Sigmoid colon (tissue), 7 donors: ENCODE measurements at regions of chr5 and their contacts with region 1.

Region 1: GRCh38 chr5:82351754-82352145 is 73.6 kb upstream of the RPS23 start:
- DNase-seq: no peak
- H3K4me3 ChIP-seq: no peak overlapping the region
- H3K27ac ChIP-seq: no peak overlapping the region
- H3K4me1 ChIP-seq: peaks cover 0 to 11% (median 5%) of the 10 kb centered on the region in 4 donors
- H3K27me3 ChIP-seq: no peaks in the 10 kb centered on the region
- CTCF ChIP-seq: peak; percentile 35 to 77 (median 75)
- EP300 ChIP-seq: no peak
- POLR2A ChIP-seq: no peak

Region 2: DNA sequence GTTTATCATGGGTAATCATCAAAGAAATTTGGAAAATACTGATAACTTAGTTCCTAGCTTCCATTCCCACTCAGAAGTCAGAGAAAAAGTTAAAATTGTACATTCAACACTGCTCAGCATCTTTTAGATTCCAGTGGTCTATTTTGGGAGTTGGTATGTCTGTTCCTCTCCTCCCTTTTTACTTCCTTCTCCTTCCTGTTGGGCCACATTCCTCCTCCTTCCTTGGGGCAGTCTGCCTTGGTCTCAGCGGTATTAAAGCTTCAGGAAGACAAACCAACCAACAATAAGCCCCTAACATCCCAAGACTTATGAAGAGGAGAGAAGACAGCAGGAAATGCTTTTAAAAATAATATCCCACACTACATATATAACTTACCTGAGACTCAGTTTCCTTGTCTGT is 551.0 kb before region 1 on chr5:
- intact Hi-C with region 1: no loop called
- DNase-seq: no peak
- H3K4me3 ChIP-seq: no peak overlapping the region
- H3K27ac ChIP-seq: no peak overlapping the region
- H3K4me1 ChIP-seq: peaks cover 0 to 4% (median 0%) of the 10 kb centered on the region in 4 donors
- H3K27me3 ChIP-seq: no peaks in the 10 kb centered on the region
- CTCF ChIP-seq: no peak
- EP300 ChIP-seq: no peak
- POLR2A ChIP-seq: no peak

Region 3: GRCh38 chr5:81936066-81936465 is 415.7 kb before region 1 on chr5:
- intact Hi-C with region 1: no loop called
- DNase-seq: no peak
- H3K4me3 ChIP-seq: no peak overlapping the region
- H3K27ac ChIP-seq: no peak overlapping the region
- H3K4me1 ChIP-seq: peaks cover 0 to 6% (median 0%) of the 10 kb centered on the region in 4 donors
- H3K27me3 ChIP-seq: no peaks in the 10 kb centered on the region
- CTCF ChIP-seq: no peak
- EP300 ChIP-seq: no peak
- POLR2A ChIP-seq: no peak

Region 4: DNA sequence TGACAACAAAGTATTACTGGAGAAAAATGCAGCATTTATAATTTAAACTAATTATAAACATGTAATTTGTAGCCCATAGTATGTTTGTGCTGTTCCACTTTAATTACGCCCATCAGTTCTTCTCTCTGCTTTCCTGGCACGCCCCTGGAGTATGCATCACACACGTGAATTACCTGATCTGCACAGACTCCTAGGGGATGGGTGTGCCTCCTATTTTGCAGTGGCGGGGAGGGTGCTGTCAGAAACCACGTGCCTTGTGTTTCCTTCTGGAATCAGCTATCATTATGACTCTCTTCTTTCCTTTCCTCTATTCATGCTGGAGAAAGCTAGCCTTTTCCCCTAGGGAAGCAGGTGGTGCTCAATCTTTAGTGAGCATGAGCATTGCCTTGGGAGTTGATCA is 116.9 kb before region 1 on chr5:
- intact Hi-C with region 1: no loop called
- DNase-seq: no peak
- H3K4me3 ChIP-seq: no peak overlapping the region
- H3K27ac ChIP-seq: no peak overlapping the region
- H3K4me1 ChIP-seq: no peaks in the 10 kb centered on the region
- H3K27me3 ChIP-seq: no peaks in the 10 kb centered on the region
- CTCF ChIP-seq: no peak
- EP300 ChIP-seq: no peak
- POLR2A ChIP-seq: no peak

Region 5: GRCh38 chr5:82396871-82397514 is 45.2 kb after region 1 on chr5:
- intact Hi-C with region 1: no loop called
- DNase-seq: peak; percentile 90
- H3K4me3 ChIP-seq: no peak overlapping the region
- H3K27ac ChIP-seq: peak overlapping the region in 2 of 4 donors; percentile 28 to 64
- H3K4me1 ChIP-seq: peaks cover 0 to 12% (median 6%) of the 10 kb centered on the region in 4 donors
- H3K27me3 ChIP-seq: no peaks in the 10 kb centered on the region
- CTCF ChIP-seq: no peak
- EP300 ChIP-seq: peak in 1 of 4 donors; percentile 52
- POLR2A ChIP-seq: no peak

Region 6: DNA sequence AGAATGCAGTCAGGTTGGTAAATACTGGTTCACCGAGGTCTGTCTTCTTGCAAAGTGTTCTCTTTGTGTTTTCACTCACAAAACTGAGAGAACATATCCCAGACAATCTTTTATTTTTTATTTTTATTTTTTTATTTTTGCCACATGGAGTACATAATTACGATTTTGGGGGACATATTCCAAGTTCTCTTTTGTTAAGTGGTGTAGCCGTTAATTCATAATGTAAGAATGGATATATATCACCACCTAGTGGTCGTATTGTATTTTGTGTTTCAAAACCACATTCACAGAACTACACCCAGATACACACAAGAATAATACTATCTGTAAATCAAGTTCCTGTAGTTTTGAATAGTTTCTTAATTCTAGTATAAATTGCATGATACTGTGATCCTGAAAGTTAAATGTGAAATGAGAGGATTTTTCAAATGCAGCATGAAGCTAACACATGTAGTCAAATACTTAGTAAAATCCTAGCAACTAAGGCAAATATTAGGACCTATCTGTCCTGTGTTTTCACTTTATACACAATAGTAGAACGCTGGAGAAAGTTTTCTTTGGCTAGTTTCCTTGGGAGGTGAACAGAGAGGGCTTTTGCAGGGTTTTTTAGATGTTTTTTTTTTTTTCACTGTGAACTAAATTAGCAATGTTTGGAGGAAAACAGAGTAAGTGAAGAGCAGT is 1212.5 kb after region 1 on chr5:
- intact Hi-C with region 1: loop called (anchors 2 kb)
- DNase-seq: no peak
- H3K4me3 ChIP-seq: no peak overlapping the region
- H3K27ac ChIP-seq: peak overlapping the region in 1 of 4 donors; percentile 40
- H3K4me1 ChIP-seq: no peaks in the 10 kb centered on the region
- H3K27me3 ChIP-seq: no peaks in the 10 kb centered on the region
- CTCF ChIP-seq: peak; percentile 25 to 69 (median 50)
- EP300 ChIP-seq: no peak
- POLR2A ChIP-seq: no peak